ENCODE measurements at regions of chr11 and their contacts with region 1.

Region 1: GRCh38 chr11:128302425-128303186 is 284.8 kb downstream of the ETS1 start:
- DNase-seq: no peak
- ATAC-seq: peak; percentile 90
- H3K4me3 Mint-ChIP-seq: peak overlapping the region; percentile 91
- H3K27ac Mint-ChIP-seq: peak overlapping the region; percentile 96
- H3K4me1 Mint-ChIP-seq: peaks cover 66% of the 10 kb centered on the region
- H3K27me3 Mint-ChIP-seq: no peaks in the 10 kb centered on the region

Region 2: GRCh38 chr11:128283451-128283850 is 19.2 kb before region 1 on chr11:
- POLR2A ChIA-PET with region 1: no interaction called
- DNase-seq: no peak
- ATAC-seq: no peak
- H3K4me3 Mint-ChIP-seq: no peak overlapping the region
- H3K27ac Mint-ChIP-seq: no peak overlapping the region
- H3K4me1 Mint-ChIP-seq: peaks cover 17% of the 10 kb centered on the region
- H3K27me3 Mint-ChIP-seq: peaks cover 11% of the 10 kb centered on the region

Region 3: GRCh38 chr11:128342511-128343134 is 40.0 kb after region 1 on chr11:
- POLR2A ChIA-PET with region 1: interaction called, 10 read pairs
- DNase-seq: peak; percentile 44
- ATAC-seq: peak; percentile 48
- H3K4me3 Mint-ChIP-seq: peak overlapping the region; percentile 87
- H3K27ac Mint-ChIP-seq: peak overlapping the region; percentile 97
- H3K4me1 Mint-ChIP-seq: peaks cover 43% of the 10 kb centered on the region
- H3K27me3 Mint-ChIP-seq: no peaks in the 10 kb centered on the region

Region 4: GRCh38 chr11:128361451-128362020 is 58.9 kb after region 1 on chr11:
- POLR2A ChIA-PET with region 1: no interaction called
- DNase-seq: no peak
- ATAC-seq: no peak
- H3K4me3 Mint-ChIP-seq: no peak overlapping the region
- H3K27ac Mint-ChIP-seq: no peak overlapping the region
- H3K4me1 Mint-ChIP-seq: no peaks in the 10 kb centered on the region
- H3K27me3 Mint-ChIP-seq: peaks cover 2% of the 10 kb centered on the region

Region 5: DNA sequence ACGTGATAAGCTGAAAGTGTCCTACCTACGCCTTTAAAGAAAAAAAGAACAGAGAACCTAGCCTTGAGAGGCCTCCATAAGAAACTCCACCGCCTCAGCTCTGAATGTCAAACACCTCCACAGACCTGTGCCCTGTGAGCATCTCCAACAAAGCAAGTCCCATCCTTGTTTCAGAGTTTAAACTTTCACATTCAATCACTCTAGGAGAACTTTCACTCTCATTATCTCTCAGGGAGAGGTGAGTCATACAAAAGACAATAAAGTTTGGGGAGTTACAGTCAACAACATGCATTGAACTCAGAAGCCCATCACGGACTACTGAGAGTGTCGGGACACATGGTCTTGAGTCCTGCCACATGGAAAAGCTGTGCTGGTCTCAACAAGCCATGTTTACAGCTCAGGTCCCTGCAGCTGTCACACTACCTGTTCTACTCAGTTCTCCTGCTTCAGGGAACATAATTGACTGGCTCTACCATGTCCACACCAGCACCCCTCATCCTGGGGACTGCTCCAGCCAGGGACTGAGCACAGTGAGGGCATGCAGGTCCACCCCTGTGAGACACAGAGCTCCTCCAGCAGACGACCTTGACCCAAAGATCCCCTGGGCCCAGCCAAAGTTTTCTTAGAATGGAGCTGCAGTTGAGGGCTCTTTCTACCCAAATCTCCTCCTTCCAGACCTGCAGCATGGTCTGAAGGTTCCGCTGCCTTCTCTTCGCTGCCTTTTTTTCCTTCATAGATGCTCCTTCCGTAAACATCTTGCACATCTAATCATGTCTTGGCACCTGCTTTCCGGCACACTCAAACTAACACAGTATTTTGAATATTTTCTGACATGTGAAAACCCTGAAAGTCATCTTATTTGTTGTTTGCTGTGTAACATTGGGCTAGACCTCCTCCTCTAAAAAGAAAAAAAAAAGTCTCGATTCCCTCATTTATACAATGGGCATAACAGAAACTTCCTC is 169.8 kb after region 1 on chr11:
- POLR2A ChIA-PET with region 1: interaction called, 62 read pairs
- DNase-seq: no peak
- ATAC-seq: peak; percentile 49
- H3K4me3 Mint-ChIP-seq: peak overlapping the region; percentile 74
- H3K27ac Mint-ChIP-seq: peak overlapping the region; percentile 97
- H3K4me1 Mint-ChIP-seq: peaks cover 88% of the 10 kb centered on the region
- H3K27me3 Mint-ChIP-seq: no peaks in the 10 kb centered on the region

Region 6: DNA sequence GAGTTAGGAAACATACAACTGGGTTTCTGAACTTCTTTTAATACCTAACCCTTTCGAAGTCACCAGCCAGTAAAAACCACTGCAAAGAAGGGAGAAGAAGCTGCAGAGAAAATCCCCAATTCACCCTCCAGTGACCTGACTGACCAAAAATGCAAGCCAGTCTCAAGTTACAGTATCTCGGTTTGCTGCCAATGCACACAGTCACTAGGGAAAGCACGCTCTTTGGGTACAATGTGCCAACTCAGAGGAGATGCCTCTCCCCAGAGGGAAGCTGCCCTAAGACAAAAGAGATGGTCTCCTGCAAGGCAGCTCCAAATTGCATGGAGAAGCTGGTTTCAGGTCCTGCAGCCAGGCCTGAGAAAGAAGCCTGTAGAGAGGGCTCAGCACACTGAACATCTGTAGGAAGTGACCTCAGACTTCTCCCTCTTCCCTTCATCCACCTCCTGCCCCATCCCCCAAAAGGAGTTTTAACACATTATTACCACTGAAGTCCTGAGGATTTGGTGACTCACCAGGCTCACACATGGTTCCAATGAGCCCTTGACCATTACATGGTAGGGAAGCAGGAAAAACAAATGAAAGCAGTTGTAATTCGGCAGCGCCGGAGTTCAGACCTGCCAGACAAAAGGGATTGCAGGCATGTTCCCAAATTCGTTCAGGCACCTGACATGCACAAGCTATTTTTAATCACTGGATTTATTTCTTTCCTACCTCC is 194.6 kb after region 1 on chr11:
- POLR2A ChIA-PET with region 1: interaction called, 18 read pairs
- DNase-seq: peak; percentile 36
- ATAC-seq: no peak
- H3K4me3 Mint-ChIP-seq: peak overlapping the region; percentile 78
- H3K27ac Mint-ChIP-seq: peak overlapping the region; percentile 93
- H3K4me1 Mint-ChIP-seq: peaks cover 93% of the 10 kb centered on the region
- H3K27me3 Mint-ChIP-seq: no peaks in the 10 kb centered on the region

Region 7: DNA sequence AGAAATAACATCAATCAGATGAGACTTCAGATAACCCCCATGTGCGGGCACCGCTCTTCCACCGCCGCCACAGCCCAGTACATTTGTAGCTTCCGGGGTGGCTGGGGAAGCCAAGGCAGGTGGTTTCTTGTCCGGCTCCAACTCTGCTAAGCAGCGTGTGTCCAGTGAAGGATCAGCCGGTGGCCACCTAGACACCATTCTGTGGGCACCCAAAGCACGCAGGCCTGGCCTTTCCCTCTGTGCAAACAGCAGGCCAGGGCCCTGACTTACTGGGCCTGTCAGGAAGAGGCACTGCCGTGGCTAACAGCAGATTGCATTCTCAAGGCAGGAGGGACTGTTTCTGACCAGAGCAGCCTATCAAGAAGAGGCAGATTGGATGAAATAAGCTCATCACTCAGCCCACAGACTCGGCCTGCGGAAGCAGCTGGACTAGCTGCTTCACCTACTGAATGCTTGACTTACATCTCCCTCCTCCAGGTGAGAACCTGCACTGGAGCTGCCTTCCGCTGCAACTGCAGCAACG is 209.9 kb after region 1 on chr11:
- POLR2A ChIA-PET with region 1: interaction called, 160 read pairs
- DNase-seq: peak; percentile 72
- ATAC-seq: peak; percentile 50
- H3K4me3 Mint-ChIP-seq: peak overlapping the region; percentile 98
- H3K27ac Mint-ChIP-seq: peak overlapping the region; percentile 97
- H3K4me1 Mint-ChIP-seq: peaks cover 84% of the 10 kb centered on the region
- H3K27me3 Mint-ChIP-seq: no peaks in the 10 kb centered on the region

Measured in activated naive CD8-positive, alpha-beta T cell treated with anti-CD3 and anti-CD28 coated beads, Interleukin-2, amount 10 ng/mL, durations not matched to agents 7 days and 5 days (primary cell).